Transverse colon (tissue), 4 donors: ENCODE measurements at regions of chr21 and their contacts with region 1.

Region 1: GRCh38 chr21:38933716-38934115 is 128.0 kb downstream of the ETS2 start:
- DNase-seq: no peak
- H3K4me3 ChIP-seq: no peak overlapping the region
- H3K27ac ChIP-seq: no peak overlapping the region
- H3K4me1 ChIP-seq: peaks cover 0 to 6% (median 0%) of the 10 kb centered on the region in 4 donors
- H3K27me3 ChIP-seq: no peaks in the 10 kb centered on the region
- CTCF ChIP-seq: no peak
- EP300 ChIP-seq: no peak
- POLR2A ChIP-seq: no peak

Region 2: DNA sequence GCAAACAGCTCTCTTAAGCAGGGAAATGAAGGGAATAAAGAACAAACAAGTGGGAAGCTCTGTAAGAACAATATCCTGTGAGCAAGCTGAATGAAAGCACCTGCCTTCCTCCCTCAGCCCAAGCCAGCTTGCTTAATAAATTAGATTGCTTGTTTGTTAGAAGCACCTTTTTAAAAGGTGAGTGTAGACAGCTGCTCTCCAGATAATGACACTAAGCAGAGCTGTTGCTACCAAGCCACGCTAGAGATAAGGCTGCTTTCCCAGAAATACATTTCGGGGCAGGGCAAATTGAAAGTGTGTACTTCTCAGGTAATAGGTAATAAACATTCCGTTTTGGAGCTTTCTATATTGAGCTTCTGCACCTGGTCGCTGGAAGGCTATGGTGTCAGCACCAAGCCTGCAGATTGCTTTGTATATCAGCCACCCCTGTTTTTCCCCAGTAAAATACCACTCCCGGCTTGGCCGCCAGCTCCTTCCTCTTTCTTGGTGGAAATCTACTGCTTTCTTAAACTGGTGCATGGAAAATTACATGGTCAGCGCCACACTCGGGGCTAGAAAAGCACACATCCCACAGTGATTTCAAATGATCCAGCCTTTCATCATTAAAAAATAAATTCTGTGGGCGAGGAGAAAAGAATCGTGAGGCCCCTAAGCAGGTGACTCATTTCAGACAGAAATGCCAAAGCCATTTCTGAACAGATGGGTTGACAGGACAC is 23.3 kb after region 1 on chr21:
- in situ Hi-C with region 1: no loop called
- intact Hi-C with region 1: loop called (anchors 2 kb)
- DNase-seq: peak; percentile 46
- H3K4me3 ChIP-seq: no peak overlapping the region
- H3K27ac ChIP-seq: peak overlapping the region; percentile 81 to 86 (median 84)
- H3K4me1 ChIP-seq: peaks cover 23 to 62% (median 49%) of the 10 kb centered on the region in 4 donors
- H3K27me3 ChIP-seq: no peaks in the 10 kb centered on the region
- CTCF ChIP-seq: no peak
- EP300 ChIP-seq: no peak
- POLR2A ChIP-seq: no peak